Endothelial cell of umbilical vein (primary cell): ENCODE measurements at regions of chr1 and their contacts with region 1.

Region 1: GRCh38 chr1:110460253-110461220 is 9.6 kb downstream of the PROK1 start:
- DNase-seq: peak; percentile 74
- H3K4me3 ChIP-seq: no peak overlapping the region
- H3K27ac ChIP-seq: no peak overlapping the region
- H3K4me1 ChIP-seq: no peaks in the 10 kb centered on the region
- H3K27me3 ChIP-seq: no peaks in the 10 kb centered on the region
- CTCF ChIP-seq: peak; percentile 90 to 91
- POLR2A ChIP-seq: no peak

Region 2: DNA sequence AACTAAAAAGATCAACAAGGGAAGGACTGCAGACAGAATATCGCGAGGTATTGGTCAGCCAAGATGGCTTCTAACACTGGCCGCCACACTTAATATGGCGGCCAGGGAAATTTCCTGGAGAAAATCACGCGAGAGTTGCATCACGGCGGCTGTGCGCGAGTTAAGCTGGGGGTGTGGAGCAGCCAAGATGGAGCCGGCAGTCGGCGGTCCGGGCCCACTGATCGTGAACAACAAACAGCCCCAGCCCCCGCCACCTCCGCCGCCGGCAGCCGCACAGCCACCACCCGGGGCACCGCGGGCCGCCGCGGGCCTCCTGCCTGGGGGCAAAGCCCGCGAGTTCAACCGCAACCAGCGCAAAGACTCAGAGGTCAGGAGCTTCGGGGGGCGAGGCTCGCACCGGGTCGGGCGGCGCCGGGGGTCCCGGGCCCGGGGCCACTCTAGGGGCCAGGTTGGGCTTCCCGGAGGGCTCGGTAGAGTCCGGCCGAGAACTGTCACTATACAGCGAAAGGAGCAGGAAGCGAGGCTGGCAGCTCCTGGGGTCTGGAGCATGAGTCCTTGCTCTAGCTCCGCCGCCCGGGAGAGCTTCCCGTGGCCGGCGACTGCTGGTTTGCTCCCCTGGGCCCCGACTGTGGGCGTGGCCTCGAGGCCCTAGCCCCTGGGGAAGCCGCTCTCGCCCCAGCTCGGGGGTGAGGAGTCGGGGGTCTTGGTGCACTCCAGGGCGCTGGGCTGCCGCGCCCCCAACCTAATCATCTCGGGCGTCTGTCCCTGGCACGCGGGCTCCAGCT is 425.9 kb before region 1 on chr1 and contains the start of gene STRIP1:
- CTCF ChIA-PET with region 1: interaction called, 19 read pairs
- POLR2A ChIA-PET with region 1: no interaction called
- dilution Hi-C with region 1: no loop called
- intact Hi-C with region 1: no loop called
- DNase-seq: peak; percentile 96
- H3K4me3 ChIP-seq: peak within 1 kb of the TSS; percentile 76 to 90 (median 82)
- H3K27ac ChIP-seq: peak within 1 kb of the TSS; percentile 61
- H3K4me1 ChIP-seq: peaks cover 9% of the 10 kb centered on the region
- H3K27me3 ChIP-seq: no peaks in the 10 kb centered on the region
- CTCF ChIP-seq: no peak
- POLR2A ChIP-seq: peak; percentile 74
- total RNA-seq, gene STRIP1: 38.9 and 42.1 TPM in 2 replicates

Region 3: GRCh38 chr1:110196917-110197765 is 263.4 kb before region 1 on chr1:
- CTCF ChIA-PET with region 1: interaction called, 211 read pairs
- POLR2A ChIA-PET with region 1: no interaction called
- dilution Hi-C with region 1: no loop called
- intact Hi-C with region 1: loop called (anchors 1 kb)
- DNase-seq: peak; percentile 34
- H3K4me3 ChIP-seq: no peak overlapping the region
- H3K27ac ChIP-seq: no peak overlapping the region
- H3K4me1 ChIP-seq: no peaks in the 10 kb centered on the region
- H3K27me3 ChIP-seq: no peaks in the 10 kb centered on the region
- CTCF ChIP-seq: peak; percentile 75 to 92
- POLR2A ChIP-seq: no peak

Region 4: DNA sequence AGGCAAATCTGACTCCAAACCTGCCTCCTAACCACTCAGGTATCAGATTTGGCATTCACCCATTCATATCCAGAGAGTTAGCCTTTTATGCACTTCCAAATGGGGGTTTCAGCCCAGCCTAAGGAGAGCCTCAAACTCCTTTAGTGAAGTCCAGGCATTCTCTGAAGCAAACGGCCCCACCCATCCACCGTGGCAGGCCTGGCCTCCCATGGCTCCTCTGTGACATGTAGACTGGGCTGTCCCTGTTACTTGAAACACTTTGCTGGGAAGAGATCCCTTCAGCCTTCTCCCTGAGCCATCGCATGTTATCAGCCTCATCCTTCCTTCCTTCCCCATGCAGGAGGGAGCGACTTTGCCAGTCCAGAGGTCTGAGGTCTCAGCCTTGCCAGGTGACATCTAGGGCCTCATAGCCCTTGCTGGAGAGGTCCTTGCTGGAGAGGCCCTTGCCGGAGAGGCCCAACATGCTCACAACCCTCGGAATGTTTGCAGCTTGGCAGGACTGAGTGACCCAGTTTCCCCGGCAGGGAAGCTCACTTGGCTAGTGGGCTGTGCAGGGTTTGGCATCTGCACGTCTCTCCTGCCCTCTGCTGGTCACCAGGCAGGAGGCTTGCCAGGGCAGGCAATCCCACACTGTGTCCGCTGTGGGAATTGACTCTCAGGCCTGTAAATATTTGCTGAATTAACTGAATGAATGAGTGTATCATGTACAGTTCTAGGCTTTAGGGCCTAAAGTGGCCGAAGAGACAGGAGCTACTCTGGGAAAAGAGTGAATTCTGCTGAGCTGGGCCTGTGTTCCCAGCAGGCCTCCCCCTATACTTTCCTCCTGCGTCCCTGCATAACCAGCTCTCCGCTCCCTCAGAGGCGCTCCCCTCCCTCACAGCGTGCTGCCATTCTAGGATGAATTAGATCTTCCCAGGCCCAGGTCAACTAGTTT is 148.1 kb before region 1 on chr1:
- CTCF ChIA-PET with region 1: interaction called, 51 read pairs
- POLR2A ChIA-PET with region 1: no interaction called
- dilution Hi-C with region 1: no loop called
- intact Hi-C with region 1: loop called (anchors 1 kb)
- DNase-seq: peak; percentile 70
- H3K4me3 ChIP-seq: no peak overlapping the region
- H3K27ac ChIP-seq: no peak overlapping the region
- H3K4me1 ChIP-seq: no peaks in the 10 kb centered on the region
- H3K27me3 ChIP-seq: no peaks in the 10 kb centered on the region
- CTCF ChIP-seq: peak; percentile 88 to 96
- POLR2A ChIP-seq: no peak

Region 5: GRCh38 chr1:110407260-110408210 is 53.0 kb before region 1 on chr1 and contains the start of gene LAMTOR5:
- CTCF ChIA-PET with region 1: interaction called, 118 read pairs
- POLR2A ChIA-PET with region 1: no interaction called
- dilution Hi-C with region 1: no loop called
- intact Hi-C with region 1: loop called (anchors 1 kb)
- DNase-seq: peak; percentile 97
- H3K4me3 ChIP-seq: peak within 1 kb of the TSS; percentile 94 to 100 (median 95)
- H3K27ac ChIP-seq: peak within 1 kb of the TSS; percentile 69
- H3K4me1 ChIP-seq: peaks cover 9% of the 10 kb centered on the region
- H3K27me3 ChIP-seq: no peaks in the 10 kb centered on the region
- CTCF ChIP-seq: no peak
- POLR2A ChIP-seq: peak; percentile 92
- total RNA-seq, gene LAMTOR5: 137 and 150 TPM in 2 replicates

Region 6: DNA sequence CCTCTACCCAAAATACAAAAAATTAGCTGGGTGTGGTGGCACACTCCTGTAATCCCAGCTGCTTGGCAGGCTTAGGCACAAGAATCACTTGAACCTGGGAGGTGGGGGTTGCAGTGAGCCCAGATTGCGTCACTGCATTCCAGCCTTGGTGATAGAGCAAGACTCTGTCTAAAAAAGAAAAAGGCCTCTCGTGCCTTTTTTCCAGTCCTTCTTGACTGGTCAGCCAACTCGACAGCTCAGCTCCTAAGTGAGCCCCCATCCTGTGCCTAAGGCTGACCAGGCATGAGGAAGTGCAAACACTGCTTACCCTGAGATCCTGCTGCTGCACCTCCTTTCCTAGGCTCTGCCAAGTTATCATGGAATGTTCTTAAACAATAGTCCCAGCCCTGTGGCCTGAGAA is 19.7 kb before region 1 on chr1:
- CTCF ChIA-PET with region 1: interaction called, 16 read pairs
- POLR2A ChIA-PET with region 1: no interaction called
- dilution Hi-C with region 1: no loop called
- intact Hi-C with region 1: no loop called
- DNase-seq: no peak
- H3K4me3 ChIP-seq: no peak overlapping the region
- H3K27ac ChIP-seq: no peak overlapping the region
- H3K4me1 ChIP-seq: no peaks in the 10 kb centered on the region
- H3K27me3 ChIP-seq: peaks cover 7 to 10% of the 10 kb centered on the region in 2 experiments
- CTCF ChIP-seq: no peak
- POLR2A ChIP-seq: no peak

Region 7: GRCh38 chr1:110482662-110483307 is 22.2 kb after region 1 on chr1:
- CTCF ChIA-PET with region 1: interaction called, 16 read pairs
- POLR2A ChIA-PET with region 1: no interaction called
- dilution Hi-C with region 1: no loop called
- intact Hi-C with region 1: no loop called
- DNase-seq: no peak
- H3K4me3 ChIP-seq: no peak overlapping the region
- H3K27ac ChIP-seq: no peak overlapping the region
- H3K4me1 ChIP-seq: no peaks in the 10 kb centered on the region
- H3K27me3 ChIP-seq: no peaks in the 10 kb centered on the region
- CTCF ChIP-seq: no peak
- POLR2A ChIP-seq: no peak

Region 8: DNA sequence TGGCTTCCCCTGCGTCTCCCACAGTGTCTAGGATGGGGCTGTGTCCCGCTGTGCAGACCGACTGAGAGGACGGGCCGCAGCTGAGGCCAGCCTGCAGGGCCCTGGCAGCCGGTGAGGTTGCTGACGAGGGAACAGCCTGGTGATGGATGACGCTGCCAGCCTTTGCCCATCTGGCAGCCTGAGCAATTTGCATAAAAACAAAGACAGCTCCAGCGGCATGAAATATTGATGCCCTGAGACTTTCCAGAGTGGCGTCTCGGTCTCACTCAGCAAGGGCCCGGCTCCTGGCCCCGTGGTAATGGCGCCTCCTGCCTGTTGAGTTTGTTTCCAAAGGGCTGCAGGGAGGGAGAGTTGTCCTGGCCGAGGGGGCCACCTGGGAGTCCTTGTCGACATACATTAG is 77.5 kb after region 1 on chr1:
- CTCF ChIA-PET with region 1: no interaction called
- POLR2A ChIA-PET with region 1: no interaction called
- dilution Hi-C with region 1: no loop called
- intact Hi-C with region 1: no loop called
- DNase-seq: no peak
- H3K4me3 ChIP-seq: no peak overlapping the region
- H3K27ac ChIP-seq: no peak overlapping the region
- H3K4me1 ChIP-seq: no peaks in the 10 kb centered on the region
- H3K27me3 ChIP-seq: no peaks in the 10 kb centered on the region
- CTCF ChIP-seq: no peak
- POLR2A ChIP-seq: no peak

Region 9: DNA sequence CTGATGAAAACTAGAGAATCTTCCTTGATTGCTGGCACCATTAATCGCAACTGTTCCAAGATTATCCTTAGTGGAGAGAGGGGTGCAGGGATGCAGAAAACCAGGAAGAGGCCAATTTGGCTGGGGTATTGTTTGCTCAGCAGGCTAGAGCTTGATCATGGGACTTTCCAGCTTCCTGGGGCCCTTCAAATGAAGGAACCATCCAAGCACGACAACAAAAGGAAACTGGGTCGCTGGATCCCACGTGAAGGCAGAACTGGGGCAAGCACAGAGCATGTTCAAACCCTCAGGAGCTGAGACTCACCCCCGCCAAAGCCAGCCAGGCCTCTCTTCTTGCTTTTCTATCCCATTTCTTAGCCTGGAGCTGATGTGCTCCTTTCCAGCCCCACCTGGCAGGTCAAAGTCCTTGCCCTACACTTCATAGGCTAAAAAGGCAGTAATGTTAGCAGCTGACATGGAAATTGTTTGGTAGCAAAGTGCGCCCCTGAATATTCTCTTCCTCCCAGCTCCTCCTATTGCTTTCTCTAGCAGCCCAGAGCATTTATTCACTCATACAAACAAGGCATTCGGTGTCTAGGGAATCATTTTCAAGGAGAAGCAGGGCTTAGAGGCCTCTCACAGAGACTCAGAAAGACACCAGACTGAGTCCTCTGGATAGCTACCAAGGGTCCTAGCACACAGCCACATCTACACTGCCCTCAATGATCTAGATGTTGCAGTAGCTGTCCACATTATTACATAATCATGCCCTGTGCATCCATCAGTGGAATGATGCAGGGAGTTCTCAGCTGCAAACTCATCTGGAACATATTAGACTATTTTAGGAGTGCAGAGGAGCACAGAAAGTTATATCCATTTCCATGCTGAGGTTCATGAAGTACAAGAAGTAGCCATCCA is 134.2 kb after region 1 on chr1:
- CTCF ChIA-PET with region 1: no interaction called
- POLR2A ChIA-PET with region 1: no interaction called
- dilution Hi-C with region 1: no loop called
- intact Hi-C with region 1: no loop called
- DNase-seq: no peak
- H3K4me3 ChIP-seq: no peak overlapping the region
- H3K27ac ChIP-seq: no peak overlapping the region
- H3K4me1 ChIP-seq: no peaks in the 10 kb centered on the region
- H3K27me3 ChIP-seq: peaks cover 0 to 2% of the 10 kb centered on the region in 2 experiments
- CTCF ChIP-seq: no peak
- POLR2A ChIP-seq: no peak